ENCODE measurements at regions of chr19 and their contacts with region 1.

Region 1: DNA sequence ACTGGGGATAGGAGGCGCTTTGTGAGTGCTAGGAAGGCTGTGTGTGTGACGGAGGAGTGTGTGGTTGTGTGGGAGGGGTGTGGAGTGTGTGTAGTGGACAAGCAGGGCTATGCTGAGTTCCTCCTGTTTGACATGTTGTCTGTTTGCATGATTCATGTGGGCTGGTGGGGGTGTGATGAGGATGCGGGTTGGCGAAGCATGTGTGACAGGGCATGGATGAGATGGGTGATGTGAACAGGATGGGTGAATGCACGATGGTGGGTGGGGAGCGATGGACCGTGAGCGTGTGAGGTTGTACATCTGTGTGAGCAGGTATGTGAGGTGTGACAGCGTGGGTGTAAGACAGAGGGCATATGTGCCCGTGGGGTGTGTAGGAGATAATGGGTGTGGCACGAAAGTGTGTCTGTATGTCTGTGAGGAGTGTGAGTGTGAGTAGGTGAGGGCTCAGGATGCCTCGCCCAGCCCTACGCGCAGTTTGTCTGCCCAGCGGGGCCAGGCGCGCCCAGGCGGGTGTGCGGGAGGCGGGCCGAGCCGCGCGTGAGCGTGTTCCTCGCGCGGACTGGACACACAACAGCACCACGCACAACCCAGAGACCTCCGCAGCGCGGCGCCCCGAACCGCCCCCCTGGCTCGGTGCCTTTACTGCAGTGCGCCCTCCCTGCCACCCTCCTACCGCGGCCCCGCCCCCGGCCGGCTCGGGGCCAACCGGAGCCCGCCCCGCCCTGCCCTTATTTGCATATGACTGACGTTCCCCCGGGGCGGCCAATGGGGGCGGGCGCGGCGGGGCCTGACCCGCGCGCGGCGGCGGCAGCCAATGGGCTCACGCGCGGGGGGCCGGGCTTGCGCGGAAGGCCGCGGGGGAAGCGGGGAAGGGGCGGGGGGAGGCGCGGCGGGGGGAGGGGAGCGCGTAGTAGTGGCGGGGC is 14.4 kb downstream of the CIC start:
- DNase-seq: peak; percentile 93 to 97 (median 95)
- ATAC-seq: peak; percentile 83
- H3K4me3 ChIP-seq: peak overlapping the region; percentile 50
- H3K4me3 Mint-ChIP-seq: peak overlapping the region in 1 of 10 donors; percentile 0
- H3K27ac ChIP-seq: peak overlapping the region; percentile 83
- H3K27ac Mint-ChIP-seq: no peak overlapping the region
- H3K4me1 ChIP-seq: peaks cover 42 to 45% of the 10 kb centered on the region in 2 donors
- H3K4me1 Mint-ChIP-seq: peaks cover 22 to 44% (median 32%) of the 10 kb centered on the region in 7 donors
- H3K27me3 ChIP-seq: no peaks in the 10 kb centered on the region
- H3K27me3 Mint-ChIP-seq: no peaks in the 10 kb centered on the region

Region 2: GRCh38 chr19:41156207-41156606 is 1127.2 kb before region 1 on chr19:
- CTCF ChIA-PET with region 1: no interaction called
- POLR2A ChIA-PET with region 1: no interaction called
- intact Hi-C with region 1: no loop called
- DNase-seq: no peak
- ATAC-seq: no peak
- H3K4me3 ChIP-seq: no peak overlapping the region
- H3K4me3 Mint-ChIP-seq: no peak overlapping the region
- H3K27ac ChIP-seq: no peak overlapping the region
- H3K27ac Mint-ChIP-seq: no peak overlapping the region
- H3K4me1 ChIP-seq: no peaks in the 10 kb centered on the region
- H3K4me1 Mint-ChIP-seq: peaks cover 0 to 2% (median 0%) of the 10 kb centered on the region in 7 donors
- H3K27me3 ChIP-seq: no peaks in the 10 kb centered on the region
- H3K27me3 Mint-ChIP-seq: peaks cover 0 to 14% (median 0%) of the 10 kb centered on the region in 5 donors

Region 3: DNA sequence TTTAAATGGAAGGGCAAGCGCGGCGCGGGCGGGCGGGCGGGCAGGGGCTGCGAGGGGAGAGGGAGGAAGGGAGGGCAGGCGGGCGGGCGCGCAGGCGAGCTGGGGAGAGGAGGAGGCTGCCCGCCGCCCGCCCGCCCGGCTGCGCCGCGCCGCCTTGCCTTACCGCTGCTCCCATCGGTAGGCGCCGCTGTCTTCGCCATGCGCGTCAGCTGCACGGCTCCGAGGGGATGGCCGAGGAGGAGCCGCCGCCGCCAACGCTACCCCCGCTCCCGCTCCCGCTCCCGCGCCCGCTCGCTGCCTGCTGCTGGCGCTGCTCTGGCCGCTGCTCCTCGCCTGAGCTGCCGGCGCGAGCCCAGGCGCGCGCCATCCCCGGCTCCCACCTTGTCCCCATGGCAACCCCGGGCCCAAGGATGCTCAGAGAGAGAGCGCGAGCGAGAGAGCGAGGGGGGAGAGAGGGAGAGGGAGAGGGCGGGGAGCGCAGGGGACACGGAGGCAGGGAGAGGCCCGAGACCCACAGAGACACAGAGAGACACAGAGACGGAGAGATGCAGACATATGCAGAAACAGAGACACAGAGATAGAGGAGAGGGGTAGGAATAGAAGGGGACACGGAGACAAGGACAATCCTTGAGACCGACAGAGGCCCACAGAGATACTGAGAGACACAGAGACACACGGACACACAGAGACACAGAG is 106.3 kb before region 1 on chr19:
- CTCF ChIA-PET with region 1: no interaction called
- POLR2A ChIA-PET with region 1: no interaction called
- intact Hi-C with region 1: loop called in 1 of 2 experiments (anchors 5 kb)
- DNase-seq: peak; percentile 52 to 82 (median 67)
- ATAC-seq: peak; percentile 96
- H3K4me3 ChIP-seq: peak overlapping the region; percentile 41
- H3K4me3 Mint-ChIP-seq: peak overlapping the region in 1 of 10 donors; percentile 12
- H3K27ac ChIP-seq: no peak overlapping the region
- H3K27ac Mint-ChIP-seq: no peak overlapping the region
- H3K4me1 ChIP-seq: peaks cover 12 to 21% of the 10 kb centered on the region in 2 donors
- H3K4me1 Mint-ChIP-seq: peaks cover 16 to 24% (median 19%) of the 10 kb centered on the region in 7 donors
- H3K27me3 ChIP-seq: peaks cover 0 to 11% of the 10 kb centered on the region in 2 donors
- H3K27me3 Mint-ChIP-seq: peaks cover 13 to 34% (median 19%) of the 10 kb centered on the region in 5 donors

Region 4: DNA sequence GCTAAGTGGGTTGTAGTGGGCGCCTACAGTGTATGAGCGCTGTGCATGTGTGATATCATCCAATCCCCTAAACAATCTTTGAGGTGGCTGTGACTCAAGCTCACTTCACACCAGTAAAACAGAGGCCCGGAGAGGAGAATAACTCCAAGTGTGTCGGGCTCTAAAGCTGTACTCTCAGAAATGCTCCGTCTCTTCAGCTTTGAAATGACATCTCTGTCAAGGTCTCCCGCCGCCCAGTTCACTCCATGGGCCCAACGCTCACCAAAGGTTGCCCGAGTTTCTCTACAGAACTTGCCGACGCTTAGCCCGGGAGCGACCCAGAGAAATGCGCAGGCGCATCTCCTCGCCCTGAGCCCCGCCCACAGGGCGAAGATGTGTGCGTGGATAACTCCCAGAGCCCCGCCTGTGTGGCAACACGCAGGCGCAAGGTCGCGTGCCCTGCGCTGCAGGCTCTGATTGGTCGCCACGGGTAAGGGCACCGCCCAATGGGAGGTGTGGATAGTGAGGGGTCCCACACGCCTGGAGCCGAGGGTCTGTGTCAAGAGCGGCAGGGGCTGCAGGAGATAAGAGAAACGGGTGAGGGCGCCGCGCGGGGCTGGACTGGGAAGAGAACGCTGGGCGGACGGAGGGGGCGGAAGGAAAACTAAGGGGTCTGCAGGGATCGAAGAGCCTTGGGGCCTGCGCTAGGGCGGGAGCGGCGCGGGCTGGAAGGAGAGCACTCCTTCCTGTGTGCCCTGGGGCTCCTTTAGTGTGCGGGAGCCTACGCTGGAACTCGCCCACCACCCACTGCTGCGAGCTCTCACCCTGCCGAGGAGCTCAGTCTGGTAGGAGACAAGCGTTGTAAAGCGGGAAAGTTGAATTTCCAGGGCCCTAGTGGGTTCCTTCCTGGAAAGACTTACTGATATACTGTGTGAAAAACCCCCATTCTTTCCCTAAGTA is 63.3 kb before region 1 on chr19 and contains the start of gene ZNF526:
- CTCF ChIA-PET with region 1: interaction called, 6 read pairs
- POLR2A ChIA-PET with region 1: interaction called, 7 read pairs
- intact Hi-C with region 1: loop called (anchors 1 to 2 kb)
- DNase-seq: peak; percentile 92 to 97 (median 96)
- ATAC-seq: peak; percentile 88
- H3K4me3 ChIP-seq: peak within 1 kb of the TSS; percentile 72
- H3K4me3 Mint-ChIP-seq: peak within 1 kb of the TSS; percentile 95 to 99 (median 98)
- H3K27ac ChIP-seq: peak within 1 kb of the TSS; percentile 88
- H3K27ac Mint-ChIP-seq: peak within 1 kb of the TSS; percentile 88 to 98 (median 95)
- H3K4me1 ChIP-seq: peaks cover 37 to 43% of the 10 kb centered on the region in 2 donors
- H3K4me1 Mint-ChIP-seq: peaks cover 46 to 62% (median 55%) of the 10 kb centered on the region in 7 donors
- H3K27me3 ChIP-seq: no peaks in the 10 kb centered on the region
- H3K27me3 Mint-ChIP-seq: peaks cover 0 to 3% (median 0%) of the 10 kb centered on the region in 5 donors
- total RNA-seq, gene ZNF526: 8.6 to 25.2 (median 22.7) TPM

Region 5: DNA sequence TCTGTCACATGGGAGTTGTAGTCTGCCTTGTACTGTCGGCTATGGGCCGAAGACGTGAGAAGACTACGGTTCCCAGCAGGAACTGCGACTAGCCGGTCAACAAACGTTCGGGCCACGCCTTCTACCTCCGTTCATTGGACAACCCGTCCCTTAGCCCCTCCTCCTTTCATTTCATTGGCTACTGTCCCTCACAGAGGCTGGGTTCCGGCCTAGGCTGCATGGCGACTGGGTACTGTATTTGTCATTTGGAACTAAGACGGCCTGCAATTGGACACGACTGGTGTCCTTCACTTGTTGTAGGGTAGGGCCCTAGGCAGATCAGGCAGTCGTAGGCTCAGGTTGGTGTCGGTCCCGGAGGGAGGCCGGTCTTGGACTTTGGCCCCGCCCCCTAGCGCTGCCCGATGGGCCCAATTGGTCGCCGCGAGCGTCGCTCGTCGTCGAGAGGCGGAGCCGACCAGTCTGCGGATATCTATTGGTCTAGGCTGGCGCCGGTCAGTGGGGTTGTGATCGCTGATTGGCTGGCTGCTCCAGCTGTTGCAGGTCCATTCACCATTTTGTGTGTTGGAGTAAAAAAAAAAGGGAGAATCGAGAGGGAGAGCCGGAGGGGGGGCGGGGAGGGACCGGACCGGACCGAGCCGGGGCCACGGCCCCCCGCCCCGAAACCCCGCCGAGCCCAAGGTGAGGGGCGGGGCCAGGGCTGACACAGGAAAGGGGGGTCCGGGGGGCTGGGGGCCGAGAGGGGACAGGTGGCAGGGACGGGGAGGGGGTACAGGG is 14.5 kb before region 1 on chr19 and contains the start of gene CIC:
- CTCF ChIA-PET with region 1: interaction called, 17 read pairs
- POLR2A ChIA-PET with region 1: interaction called, 47 read pairs
- intact Hi-C with region 1: loop called (anchors 1 kb)
- DNase-seq: peak; percentile 95 to 100 (median 99)
- ATAC-seq: peak; percentile 82
- H3K4me3 ChIP-seq: peak within 1 kb of the TSS; percentile 85
- H3K4me3 Mint-ChIP-seq: peak within 1 kb of the TSS in 1 of 10 donors; percentile 94
- H3K27ac ChIP-seq: peak within 1 kb of the TSS; percentile 96
- H3K27ac Mint-ChIP-seq: peak within 1 kb of the TSS in 4 of 9 donors; percentile 98 to 99 (median 99)
- H3K4me1 ChIP-seq: peaks cover 23 to 29% of the 10 kb centered on the region in 2 donors
- H3K4me1 Mint-ChIP-seq: peaks cover 8 to 31% (median 25%) of the 10 kb centered on the region in 7 donors
- H3K27me3 ChIP-seq: no peaks in the 10 kb centered on the region
- H3K27me3 Mint-ChIP-seq: no peaks in the 10 kb centered on the region
- total RNA-seq, gene CIC: 90.4 to 134 (median 102) TPM

Region 6: GRCh38 chr19:42301656-42302203 is 18.3 kb after region 1 on chr19 and contains the start of gene PRR19:
- CTCF ChIA-PET with region 1: interaction called, 8 read pairs
- POLR2A ChIA-PET with region 1: interaction called, 4 read pairs
- intact Hi-C with region 1: loop called (anchors 1 kb)
- DNase-seq: peak in 1 of 9 donors; percentile 21
- ATAC-seq: peak; percentile 8
- H3K4me3 ChIP-seq: peak within 1 kb of the TSS; percentile 85
- H3K4me3 Mint-ChIP-seq: peak within 1 kb of the TSS; percentile 83 to 92 (median 89)
- H3K27ac ChIP-seq: peak within 1 kb of the TSS; percentile 71
- H3K27ac Mint-ChIP-seq: peak within 1 kb of the TSS; percentile 64 to 94 (median 88)
- H3K4me1 ChIP-seq: peaks cover 11 to 16% of the 10 kb centered on the region in 2 donors
- H3K4me1 Mint-ChIP-seq: peaks cover 11 to 30% (median 23%) of the 10 kb centered on the region in 7 donors
- H3K27me3 ChIP-seq: no peaks in the 10 kb centered on the region
- H3K27me3 Mint-ChIP-seq: no peaks in the 10 kb centered on the region
- total RNA-seq, gene PRR19: 0.32 to 0.68 (median 0.38) TPM in 4 of 5 experiments, not detected in the other

Region 7: GRCh38 chr19:42563352-42564210 is 280.2 kb after region 1 on chr19:
- CTCF ChIA-PET with region 1: no interaction called
- POLR2A ChIA-PET with region 1: no interaction called
- intact Hi-C with region 1: no loop called
- DNase-seq: peak in 3 of 9 donors; percentile 4 to 26 (median 17)
- ATAC-seq: peak; percentile 75
- H3K4me3 ChIP-seq: no peak overlapping the region
- H3K4me3 Mint-ChIP-seq: no peak overlapping the region
- H3K27ac ChIP-seq: no peak overlapping the region
- H3K27ac Mint-ChIP-seq: peak overlapping the region in 1 of 9 donors; percentile 42
- H3K4me1 ChIP-seq: no peaks in the 10 kb centered on the region
- H3K4me1 Mint-ChIP-seq: peaks cover 0 to 9% (median 4%) of the 10 kb centered on the region in 7 donors
- H3K27me3 ChIP-seq: no peaks in the 10 kb centered on the region
- H3K27me3 Mint-ChIP-seq: peaks cover 5 to 24% (median 18%) of the 10 kb centered on the region in 5 donors

Measured in naive thymus-derived CD4-positive, alpha-beta T cell (primary cell).